Right cardiac atrium (tissue), 5 donors: ENCODE measurements at regions of chr9 and their contacts with region 1.

Region 1: DNA sequence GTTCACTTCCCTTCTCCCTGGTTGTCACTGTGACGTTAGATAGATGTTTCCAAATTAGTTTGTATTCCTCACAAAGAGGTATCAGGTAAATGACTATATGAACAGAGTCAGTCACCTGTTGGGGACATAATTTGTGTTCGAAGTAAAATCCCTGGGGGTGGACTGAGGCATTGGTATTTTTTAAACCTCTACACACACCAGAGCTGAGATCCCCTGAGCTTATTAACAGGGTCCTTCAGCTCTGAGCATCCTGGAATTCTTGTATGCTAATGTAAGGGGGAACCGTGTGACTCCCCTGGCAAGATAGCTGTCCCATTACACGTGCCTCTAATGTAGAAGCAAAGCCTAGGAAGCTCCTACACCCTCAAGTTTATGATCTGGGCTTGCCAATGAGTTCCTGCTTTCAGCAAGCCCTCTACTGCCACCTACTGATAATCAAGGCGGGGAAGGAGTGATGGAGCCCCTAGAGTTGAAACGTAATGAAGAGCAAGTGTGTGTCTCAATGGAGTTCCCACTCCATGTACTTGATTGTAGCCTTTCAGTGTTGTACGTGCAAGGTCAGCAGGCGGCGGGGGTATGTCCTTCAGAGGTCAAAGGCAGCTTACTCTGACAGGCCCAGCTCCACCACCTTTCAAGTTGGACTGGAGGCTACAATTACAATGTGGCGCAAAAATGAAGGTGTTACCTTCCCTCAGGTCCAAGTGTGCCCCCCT is 14.4 kb downstream of the PRKACG start:
- DNase-seq: peak; percentile 54 to 67 (median 62)
- ATAC-seq: peak; percentile 90
- H3K4me3 ChIP-seq: no peak overlapping the region
- H3K27ac ChIP-seq: no peak overlapping the region
- H3K4me1 ChIP-seq: peaks cover 2% of the 10 kb centered on the region
- H3K27me3 ChIP-seq: no peaks in the 10 kb centered on the region

Region 2: DNA sequence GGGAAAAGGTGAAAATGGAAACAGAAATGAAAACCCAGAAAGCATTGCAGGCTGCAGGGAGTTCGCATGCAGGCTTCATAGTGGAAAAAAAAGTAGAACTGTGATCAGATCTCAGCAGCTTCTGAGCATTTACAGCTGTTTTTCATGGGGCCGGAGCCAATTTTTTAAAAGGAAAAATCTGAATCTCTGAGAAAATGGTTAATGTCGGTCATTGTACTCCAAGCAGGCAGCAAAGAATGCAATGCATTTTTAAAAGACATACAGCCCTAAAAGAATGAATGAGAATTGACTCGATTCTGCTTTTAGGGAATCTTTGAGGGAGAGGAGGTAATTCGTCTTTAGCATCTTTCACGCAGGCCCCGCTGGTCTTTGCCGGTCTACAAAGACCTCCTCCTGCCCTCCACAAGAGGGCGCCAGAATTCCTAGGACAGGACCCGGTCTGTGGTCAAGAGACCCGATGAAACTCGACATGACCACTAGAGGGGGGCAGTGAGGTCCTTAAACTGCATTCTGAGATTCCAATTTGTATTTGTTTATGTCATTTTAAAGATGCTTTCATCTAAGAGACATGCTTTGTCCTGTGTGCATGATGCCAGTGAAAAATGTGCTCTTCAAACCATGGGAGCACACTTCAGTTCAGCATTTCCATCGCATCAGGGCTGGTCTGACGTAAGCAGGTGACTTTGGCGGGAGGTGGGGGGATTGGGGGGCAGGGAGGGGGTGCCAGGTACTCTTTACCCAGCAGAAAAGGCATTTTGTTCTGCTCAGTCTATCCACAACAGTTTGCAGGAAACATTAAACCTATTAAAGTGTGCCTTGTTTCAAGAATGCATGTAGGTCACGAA is 415.1 kb before region 1 on chr9:
- intact Hi-C with region 1: loop called in 2 of 4 experiments (anchors 5 kb)
- DNase-seq: peak; percentile 85 to 91 (median 88)
- ATAC-seq: peak; percentile 95 to 97
- H3K4me3 ChIP-seq: no peak overlapping the region
- H3K27ac ChIP-seq: no peak overlapping the region
- H3K4me1 ChIP-seq: no peaks in the 10 kb centered on the region
- H3K27me3 ChIP-seq: no peaks in the 10 kb centered on the region

Region 3: GRCh38 chr9:68872026-68872501 is 127.5 kb before region 1 on chr9:
- intact Hi-C with region 1: loop called in 1 of 4 experiments (anchors 10 kb)
- DNase-seq: peak; percentile 18 to 73 (median 72)
- ATAC-seq: peak; percentile 82 to 86
- H3K4me3 ChIP-seq: no peak overlapping the region
- H3K27ac ChIP-seq: peak overlapping the region; percentile 6
- H3K4me1 ChIP-seq: no peaks in the 10 kb centered on the region
- H3K27me3 ChIP-seq: no peaks in the 10 kb centered on the region

Region 4: GRCh38 chr9:68933434-68934328 is 65.9 kb before region 1 on chr9:
- intact Hi-C with region 1: loop called in 1 of 4 experiments (anchors 10 kb)
- DNase-seq: no peak
- ATAC-seq: no peak
- H3K4me3 ChIP-seq: no peak overlapping the region
- H3K27ac ChIP-seq: no peak overlapping the region
- H3K4me1 ChIP-seq: no peaks in the 10 kb centered on the region
- H3K27me3 ChIP-seq: no peaks in the 10 kb centered on the region